Activated CD8-positive, alpha-beta T cell treated with anti-CD3 and anti-CD28 coated beads, Interleukin-2, amount 10 ng/mL, durations not matched to agents 7 days and 5 days (primary cell): ENCODE measurements at regions of chr6 and their contacts with region 1.

Region 1: DNA sequence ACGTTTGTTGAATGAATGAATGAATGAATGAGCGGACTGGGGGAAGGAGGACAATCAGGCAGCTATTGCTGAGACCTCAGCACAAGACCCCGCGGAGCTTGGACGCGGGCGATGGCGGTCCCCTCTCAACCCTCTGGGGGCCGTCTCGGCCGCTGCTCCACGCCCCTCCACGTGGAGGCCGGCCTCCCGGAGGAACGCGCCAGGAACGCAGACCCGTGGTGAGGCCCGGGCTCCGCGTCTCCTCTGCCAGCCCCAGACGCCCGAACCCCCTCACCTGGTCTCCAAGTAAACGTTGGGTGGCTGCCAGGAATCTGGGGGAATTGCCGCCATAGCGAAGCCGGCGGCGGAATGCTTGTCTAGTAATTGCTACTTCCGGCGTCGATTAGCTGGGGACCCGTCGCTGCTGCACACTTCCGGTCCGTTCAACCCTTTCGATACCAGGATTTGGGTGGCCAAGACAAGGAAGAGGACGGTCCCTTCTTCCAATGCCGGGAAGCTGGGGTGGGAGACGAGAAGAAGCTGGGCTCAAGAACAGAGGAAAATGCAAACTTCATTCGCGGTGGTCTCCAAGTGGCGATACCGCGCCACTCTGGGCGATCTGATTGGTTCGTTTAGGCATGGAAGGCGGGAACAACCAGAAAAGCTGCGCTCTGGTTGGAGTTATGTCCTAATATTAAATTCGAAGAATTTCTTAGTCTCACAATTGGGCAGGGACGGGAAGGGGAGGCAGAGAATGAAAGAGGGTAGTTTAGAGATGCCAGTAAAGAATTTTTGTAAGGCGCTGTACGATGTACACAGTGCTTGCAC is at the start of gene PPIL1:
- DNase-seq: peak; percentile 89
- ATAC-seq: peak; percentile 94
- H3K4me3 Mint-ChIP-seq: peak within 1 kb of the TSS; percentile 83
- H3K27ac Mint-ChIP-seq: peak within 1 kb of the TSS; percentile 98
- H3K4me1 Mint-ChIP-seq: peaks cover 47% of the 10 kb centered on the region
- H3K27me3 Mint-ChIP-seq: peaks cover 8% of the 10 kb centered on the region
- total RNA-seq, gene PPIL1: 32.6 to 33.5 TPM

Region 2: DNA sequence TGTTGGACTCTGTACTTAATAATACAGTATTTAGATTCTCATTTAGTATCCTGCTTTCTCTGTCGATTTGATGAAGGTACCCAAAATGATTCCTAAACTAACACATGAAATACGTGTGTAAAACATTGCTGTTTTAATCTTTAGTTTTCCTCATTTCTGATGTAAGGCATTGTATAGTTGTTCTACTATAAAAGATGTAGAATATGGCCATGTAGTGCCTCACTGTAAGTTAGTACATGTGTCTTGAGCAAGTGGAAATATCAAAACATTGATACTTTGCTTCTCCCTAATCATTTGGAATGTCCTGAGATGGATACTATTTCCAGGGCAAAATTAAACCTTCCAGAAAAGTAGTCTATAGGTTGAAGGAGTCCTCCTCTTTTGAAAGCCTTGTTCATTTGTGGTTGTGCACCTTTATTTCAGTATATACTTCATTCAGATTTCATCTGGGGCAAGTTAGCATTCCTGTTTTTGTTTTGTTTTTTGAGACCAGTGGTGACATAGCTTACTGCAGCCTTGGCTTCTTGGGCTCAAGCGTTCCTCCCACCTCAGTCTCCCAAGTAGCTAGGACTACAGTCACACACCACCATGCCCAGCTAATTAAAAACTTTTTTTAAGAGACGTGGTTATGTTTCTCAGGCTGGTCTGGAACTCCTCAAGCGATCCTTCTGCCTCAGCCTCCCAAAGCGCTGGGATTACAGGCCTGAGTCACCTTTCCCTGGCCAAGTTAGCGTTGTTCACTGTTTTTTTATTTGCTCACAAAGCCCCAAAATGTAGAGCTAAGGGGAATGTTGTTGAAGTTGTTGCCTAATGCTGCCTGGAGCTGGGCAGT is 268.9 kb before region 1 on chr6:
- CTCF ChIA-PET with region 1: no interaction called
- POLR2A ChIA-PET with region 1: no interaction called
- DNase-seq: no peak
- ATAC-seq: no peak
- H3K4me3 Mint-ChIP-seq: no peak overlapping the region
- H3K27ac Mint-ChIP-seq: peak overlapping the region; percentile 33
- H3K4me1 Mint-ChIP-seq: peaks cover 61% of the 10 kb centered on the region
- H3K27me3 Mint-ChIP-seq: no peaks in the 10 kb centered on the region

Region 3: GRCh38 chr6:36820700-36821580 is 53.7 kb before region 1 on chr6:
- CTCF ChIA-PET with region 1: no interaction called
- POLR2A ChIA-PET with region 1: no interaction called
- DNase-seq: no peak
- ATAC-seq: no peak
- H3K4me3 Mint-ChIP-seq: no peak overlapping the region
- H3K27ac Mint-ChIP-seq: no peak overlapping the region
- H3K4me1 Mint-ChIP-seq: peaks cover 14% of the 10 kb centered on the region
- H3K27me3 Mint-ChIP-seq: peaks cover 3% of the 10 kb centered on the region

Region 4: DNA sequence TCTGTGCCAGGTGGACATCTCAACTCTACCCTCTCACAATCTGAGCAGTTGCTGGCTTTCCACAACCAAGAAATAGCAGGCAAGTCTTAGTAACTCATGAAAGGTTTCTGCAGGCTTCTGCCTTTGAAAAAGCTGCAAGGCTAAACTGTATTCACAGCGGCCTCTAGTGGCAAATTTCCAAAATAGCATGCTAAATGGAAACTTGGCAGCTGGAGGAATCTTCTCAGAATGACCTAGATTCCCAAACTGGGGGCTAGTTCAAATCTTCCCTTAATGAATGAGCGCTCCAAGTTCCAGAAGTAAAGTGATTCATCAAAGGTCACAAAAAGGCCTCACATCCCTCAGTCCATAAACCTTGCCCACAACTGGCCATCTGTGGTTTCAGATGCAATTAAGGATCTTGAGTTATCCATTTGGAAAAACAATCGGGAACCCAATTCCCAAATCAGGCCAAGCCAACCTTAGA is 23.5 kb before region 1 on chr6:
- CTCF ChIA-PET with region 1: interaction called, 71 read pairs
- POLR2A ChIA-PET with region 1: no interaction called
- DNase-seq: peak; percentile 68
- ATAC-seq: no peak
- H3K4me3 Mint-ChIP-seq: no peak overlapping the region
- H3K27ac Mint-ChIP-seq: no peak overlapping the region
- H3K4me1 Mint-ChIP-seq: peaks cover 5% of the 10 kb centered on the region
- H3K27me3 Mint-ChIP-seq: no peaks in the 10 kb centered on the region

Region 5: GRCh38 chr6:36862164-36862847 is 12.3 kb before region 1 on chr6:
- CTCF ChIA-PET with region 1: interaction called, 28 read pairs
- POLR2A ChIA-PET with region 1: interaction called, 6 read pairs
- DNase-seq: no peak
- ATAC-seq: no peak
- H3K4me3 Mint-ChIP-seq: no peak overlapping the region
- H3K27ac Mint-ChIP-seq: no peak overlapping the region
- H3K4me1 Mint-ChIP-seq: peaks cover 23% of the 10 kb centered on the region
- H3K27me3 Mint-ChIP-seq: no peaks in the 10 kb centered on the region

Region 6: GRCh38 chr6:36912586-36912985 is 37.9 kb after region 1 on chr6:
- CTCF ChIA-PET with region 1: interaction called, 14 read pairs
- POLR2A ChIA-PET with region 1: interaction called, 3 read pairs
- DNase-seq: peak; percentile 83
- ATAC-seq: peak; percentile 94
- H3K4me3 Mint-ChIP-seq: peak overlapping the region; percentile 72
- H3K27ac Mint-ChIP-seq: peak overlapping the region; percentile 87
- H3K4me1 Mint-ChIP-seq: peaks cover 57% of the 10 kb centered on the region
- H3K27me3 Mint-ChIP-seq: no peaks in the 10 kb centered on the region

Region 7: GRCh38 chr6:36979347-36979742 is 104.7 kb after region 1 on chr6:
- CTCF ChIA-PET with region 1: interaction called, 12 read pairs
- POLR2A ChIA-PET with region 1: interaction called, 3 read pairs
- DNase-seq: peak; percentile 67
- ATAC-seq: peak; percentile 67
- H3K4me3 Mint-ChIP-seq: no peak overlapping the region
- H3K27ac Mint-ChIP-seq: peak overlapping the region; percentile 31
- H3K4me1 Mint-ChIP-seq: peaks cover 34% of the 10 kb centered on the region
- H3K27me3 Mint-ChIP-seq: no peaks in the 10 kb centered on the region

Region 8: DNA sequence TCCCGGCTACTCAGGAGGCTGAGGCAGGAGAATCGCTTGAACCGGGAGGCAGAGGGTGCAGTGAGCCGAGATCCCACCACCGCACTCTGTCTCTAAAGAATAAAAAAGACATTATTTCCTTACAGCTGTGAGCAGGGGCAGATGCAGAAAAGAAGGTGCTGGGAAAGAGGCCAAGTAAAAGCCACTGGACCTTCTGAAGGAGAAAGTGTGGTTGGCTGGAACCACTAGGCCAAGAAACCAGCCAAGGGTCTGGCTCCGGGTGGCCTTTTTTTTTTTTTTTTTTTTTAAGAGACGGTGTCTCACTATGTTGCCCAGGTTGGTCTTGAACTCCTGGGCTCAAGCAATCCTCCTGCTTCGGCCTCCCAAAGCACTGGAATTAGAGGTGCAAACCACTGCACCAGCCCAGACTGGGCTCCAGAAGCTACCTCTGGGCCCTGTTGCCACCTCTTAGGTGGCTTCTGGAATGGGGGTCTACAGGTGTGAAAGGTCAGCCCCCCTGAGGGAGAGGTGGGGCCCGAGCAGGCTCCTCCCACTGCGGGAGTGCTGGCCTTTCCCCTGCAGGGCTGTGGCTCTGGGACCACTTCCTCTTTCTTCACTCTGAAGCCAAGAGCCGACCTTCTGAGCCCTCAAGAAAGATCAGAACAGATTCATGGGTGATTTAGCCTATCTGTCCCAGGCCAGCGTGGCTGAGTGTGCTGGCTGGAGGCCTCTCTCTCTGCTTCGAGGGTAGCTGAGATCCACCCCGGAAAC is 130.6 kb after region 1 on chr6 and contains the start of gene FGD2:
- CTCF ChIA-PET with region 1: interaction called, 10 read pairs
- POLR2A ChIA-PET with region 1: no interaction called
- DNase-seq: no peak
- ATAC-seq: peak; percentile 31
- H3K4me3 Mint-ChIP-seq: peak within 1 kb of the TSS; percentile 56
- H3K27ac Mint-ChIP-seq: peak within 1 kb of the TSS; percentile 71
- H3K4me1 Mint-ChIP-seq: peaks cover 32% of the 10 kb centered on the region
- H3K27me3 Mint-ChIP-seq: peaks cover 3% of the 10 kb centered on the region
- total RNA-seq, gene FGD2: 10.1 to 12.1 TPM